GM12878 (cell line): ENCODE measurements at regions of chr19 and their contacts with region 1.

Region 1: GRCh38 chr19:33785795-33786194 is 10.9 kb upstream of the KCTD15 start:
- DNase-seq: no peak
- ATAC-seq: no peak
- H3K4me3 ChIP-seq: no peak overlapping the region
- H3K27ac ChIP-seq: no peak overlapping the region
- H3K4me1 ChIP-seq: no peaks in the 10 kb centered on the region
- H3K27me3 ChIP-seq: no peaks in the 10 kb centered on the region
- CTCF ChIP-seq: no peak
- EP300 ChIP-seq: no peak
- POLR2A ChIP-seq: no peak
- RAD21 ChIP-seq: no peak

Region 2: DNA sequence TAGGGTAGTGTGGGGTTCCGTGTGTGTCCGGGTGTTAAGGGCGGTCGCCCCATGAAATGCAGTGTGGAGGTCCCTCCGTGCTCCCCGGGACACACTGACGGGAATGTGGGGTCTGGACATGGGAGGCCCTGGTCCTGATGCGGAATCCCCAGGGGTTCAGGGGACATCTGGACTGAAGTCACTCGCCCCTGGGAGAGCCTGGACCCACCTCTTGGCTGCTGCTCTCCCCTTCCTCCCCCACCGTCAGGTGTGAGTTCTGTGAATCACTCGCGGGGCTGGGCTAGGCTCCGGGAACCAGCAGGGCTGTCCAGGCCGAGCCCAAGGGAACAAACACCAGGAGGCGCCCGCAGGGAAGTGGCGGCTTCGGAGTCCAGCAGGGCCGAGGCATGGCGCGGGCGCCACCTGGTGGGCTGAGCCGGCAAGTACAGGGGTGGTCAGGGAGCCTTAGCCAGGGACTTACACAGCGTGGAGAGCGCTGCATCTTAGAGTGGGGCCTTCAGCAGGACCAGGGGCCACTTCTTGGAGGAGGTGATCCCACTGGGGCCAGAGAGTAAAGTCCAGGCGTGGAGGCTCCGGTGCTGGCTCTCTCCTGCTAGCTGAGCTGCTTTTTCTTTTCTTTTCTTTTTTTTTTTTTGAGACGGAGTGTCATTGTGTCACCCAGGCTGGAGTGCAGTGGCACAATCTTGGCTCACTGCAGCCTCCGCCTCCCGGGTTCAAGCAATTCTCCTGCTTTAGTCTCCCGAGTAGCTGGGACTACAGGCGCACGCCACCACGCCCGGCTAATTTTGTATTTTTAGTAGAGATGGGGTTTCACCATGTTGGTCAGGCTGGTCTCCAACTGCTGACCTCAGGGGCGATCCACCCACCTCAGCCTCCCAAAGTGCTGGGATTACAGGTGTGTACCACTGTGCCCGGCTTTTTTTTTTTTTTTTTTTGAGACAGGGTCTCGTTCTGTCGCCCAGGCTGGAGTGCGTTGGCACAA is 715.8 kb after region 1 on chr19:
- CTCF ChIA-PET with region 1: no interaction called
- POLR2A ChIA-PET with region 1: no interaction called
- RAD21 ChIA-PET with region 1: no interaction called
- SMC1A ChIA-PET with region 1: no interaction called
- in situ Hi-C with region 1: loop called (anchors 10 kb)
- intact Hi-C with region 1: no loop called
- DNase-seq: peak; percentile 25
- ATAC-seq: peak; percentile 96
- H3K4me3 ChIP-seq: no peak overlapping the region
- H3K27ac ChIP-seq: no peak overlapping the region
- H3K4me1 ChIP-seq: no peaks in the 10 kb centered on the region
- H3K27me3 ChIP-seq: no peaks in the 10 kb centered on the region
- CTCF ChIP-seq: peak; percentile 99 to 100 (median 99); a peak in 5 of 6 replicates
- EP300 ChIP-seq: no peak
- POLR2A ChIP-seq: no peak
- RAD21 ChIP-seq: peak; percentile 79